Right ventricle myocardium inferior (tissue), 1 donor: ENCODE measurements at regions of chr1 and their contacts with region 1.

Region 1: GRCh38 chr1:212138441-212138840 is 102.9 kb downstream of the DTL start:
- DNase-seq: no peak
- ATAC-seq: no peak

Region 2: DNA sequence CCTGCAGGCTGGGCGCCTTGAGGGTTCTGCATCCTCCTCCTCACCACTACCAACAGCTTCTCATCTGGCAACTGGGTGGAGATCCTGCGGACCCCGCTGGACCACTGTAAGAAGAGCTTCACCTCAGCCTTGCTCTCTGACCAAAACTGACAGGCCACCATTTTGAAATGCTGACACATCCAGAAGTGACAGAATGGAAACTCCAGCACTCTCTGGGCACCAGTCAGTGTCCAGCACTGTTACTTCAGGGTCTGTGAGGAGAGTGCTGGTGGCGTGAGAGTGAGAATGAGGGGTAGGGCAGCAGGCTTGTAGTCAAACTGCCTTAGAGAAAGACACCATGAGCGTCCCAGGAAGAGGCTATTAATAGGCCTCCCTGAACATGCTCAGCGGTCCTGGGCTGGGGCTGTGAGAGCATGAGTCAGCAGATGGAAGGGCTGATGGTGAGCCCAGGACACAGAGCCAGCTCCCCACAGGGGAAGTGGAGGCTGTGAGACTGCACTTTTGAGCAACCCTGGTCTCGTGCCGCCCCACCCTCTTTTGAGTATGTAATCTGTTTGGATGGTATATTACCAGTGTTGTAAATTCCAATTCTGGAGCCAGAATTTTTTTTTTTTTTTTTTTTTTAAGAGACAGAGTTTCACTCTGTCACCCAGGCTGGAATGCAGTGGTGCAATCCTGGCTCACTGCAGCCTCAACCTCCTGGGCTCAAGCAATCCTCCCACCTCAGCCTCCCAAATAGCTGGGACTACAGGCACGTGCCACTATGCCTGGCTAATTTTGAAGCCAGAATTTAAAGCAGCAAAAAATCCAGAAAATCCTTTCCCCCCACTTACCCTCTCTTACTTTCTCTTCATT is 525.1 kb before region 1 on chr1:
- intact Hi-C with region 1: no loop called
- DNase-seq: peak; percentile 91
- ATAC-seq: peak; percentile 85

Region 3: DNA sequence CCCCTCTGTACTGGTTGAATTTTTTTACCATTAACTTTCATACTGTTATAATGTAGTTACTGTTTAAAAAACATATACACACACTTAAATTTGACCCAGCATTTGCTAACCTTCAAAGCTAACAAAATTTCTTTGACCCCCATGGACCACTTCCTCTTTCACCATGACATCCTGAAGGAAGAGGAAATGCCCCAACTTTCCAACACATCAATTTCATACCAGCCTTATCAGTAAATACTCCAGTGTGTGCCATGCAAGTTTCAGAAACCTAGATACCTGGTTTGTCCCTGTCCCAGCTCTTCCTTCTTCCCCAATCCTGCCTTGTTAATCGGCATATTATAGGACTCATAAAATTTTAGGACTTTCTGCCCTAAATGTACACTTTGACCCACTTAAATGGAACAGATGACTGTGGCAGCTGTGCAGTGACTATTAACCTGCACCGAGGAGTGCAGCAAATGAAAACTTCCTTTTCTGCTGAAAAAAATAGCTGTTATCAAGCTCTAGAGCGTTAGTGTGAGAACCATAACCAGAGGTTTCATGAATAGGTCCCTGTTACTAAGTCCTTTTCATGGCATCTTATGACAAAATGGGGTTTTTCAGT is 48.8 kb before region 1 on chr1:
- intact Hi-C with region 1: no loop called
- DNase-seq: no peak
- ATAC-seq: no peak

Region 4: GRCh38 chr1:212162635-212163034 is 24.2 kb after region 1 on chr1:
- intact Hi-C with region 1: loop called (anchors 2 kb)
- DNase-seq: no peak
- ATAC-seq: peak; percentile 53

Region 5: DNA sequence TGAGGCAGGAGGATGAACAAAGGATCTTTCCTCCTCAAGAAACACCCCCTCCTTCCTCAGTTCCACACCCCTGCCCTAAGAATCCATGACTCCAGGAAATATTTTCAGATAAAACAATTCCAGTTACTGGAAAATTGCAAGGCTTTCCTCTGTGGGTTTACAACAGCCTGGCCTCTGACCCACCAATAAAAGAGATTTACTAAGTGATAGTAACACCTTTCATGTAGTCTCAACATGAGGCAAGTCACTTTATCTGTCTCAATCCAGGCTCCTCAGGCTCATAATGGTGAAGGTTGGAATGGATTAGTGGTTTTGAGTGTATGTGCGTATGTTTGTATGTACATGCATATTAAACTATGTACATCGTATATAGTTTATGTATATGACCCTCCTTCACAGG is 75.3 kb after region 1 on chr1:
- intact Hi-C with region 1: no loop called
- DNase-seq: no peak
- ATAC-seq: no peak